ENCODE measurements at regions of chr1 and their contacts with region 1.

Region 1: DNA sequence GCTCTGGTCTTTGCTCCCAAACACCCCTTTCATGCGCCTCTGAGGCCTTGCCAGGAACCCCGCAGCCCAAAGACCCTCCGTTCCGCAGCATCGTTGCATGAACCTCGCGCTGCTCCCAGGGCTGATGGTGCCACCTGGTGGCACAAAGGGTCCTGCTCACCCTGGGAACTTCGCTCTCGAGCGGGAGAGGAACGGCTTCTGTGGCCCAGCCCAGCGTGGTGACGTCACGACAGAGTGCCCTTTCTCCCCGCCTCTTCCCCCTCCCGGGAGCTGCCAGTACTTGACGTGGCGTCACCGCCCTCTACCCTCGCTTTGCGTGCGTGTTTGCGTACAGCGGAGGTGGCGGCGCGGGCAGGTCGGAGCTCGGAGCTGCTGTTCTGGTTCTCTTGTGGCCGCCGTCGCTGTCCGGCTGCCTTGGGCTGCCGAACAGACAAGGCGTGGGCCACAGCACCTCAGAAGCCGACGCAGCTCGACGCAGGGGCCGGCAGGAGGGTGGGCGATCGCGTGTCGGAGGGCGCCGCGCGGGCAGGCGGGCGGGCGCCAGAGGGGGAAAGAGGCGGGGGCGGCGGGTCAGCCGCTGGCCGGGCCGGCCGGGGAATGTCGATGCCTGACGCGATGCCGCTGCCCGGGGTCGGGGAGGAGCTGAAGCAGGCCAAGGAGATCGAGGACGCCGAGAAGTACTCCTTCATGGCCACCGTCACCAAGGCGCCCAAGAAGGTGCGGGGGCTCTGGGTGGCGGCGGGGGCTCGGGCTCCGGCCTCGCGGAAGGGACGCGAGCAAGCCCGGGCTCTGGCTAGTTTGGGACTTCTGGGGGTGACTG is at the start of gene AHCYL1:
- DNase-seq: peak; percentile 98 to 99 (median 99)
- ATAC-seq: peak; percentile 99
- H3K4me3 ChIP-seq: peak within 1 kb of the TSS; percentile 75 to 84
- H3K4me3 Mint-ChIP-seq: peak within 1 kb of the TSS; percentile 99
- H3K27ac ChIP-seq: peak within 1 kb of the TSS; percentile 72 to 84
- H3K27ac Mint-ChIP-seq: peak within 1 kb of the TSS; percentile 97
- H3K4me1 ChIP-seq: peaks cover 20% of the 10 kb centered on the region
- H3K4me1 Mint-ChIP-seq: peaks cover 45% of the 10 kb centered on the region
- H3K27me3 ChIP-seq: no peaks in the 10 kb centered on the region
- H3K27me3 Mint-ChIP-seq: no peaks in the 10 kb centered on the region
- CTCF ChIP-seq: peak; percentile 86
- total RNA-seq, gene AHCYL1: 5.3 to 5.5 TPM

Region 2: GRCh38 chr1:109483672-109484518 is 500.8 kb before region 1 on chr1 and contains the start of gene ATXN7L2:
- CTCF ChIA-PET with region 1: no interaction called
- POLR2A ChIA-PET with region 1: no interaction called
- intact Hi-C with region 1: loop called (anchors 1 kb)
- DNase-seq: peak; percentile 87 to 97 (median 92)
- ATAC-seq: peak; percentile 81
- H3K4me3 ChIP-seq: peak within 1 kb of the TSS; percentile 78 to 90
- H3K4me3 Mint-ChIP-seq: peak within 1 kb of the TSS; percentile 94
- H3K27ac ChIP-seq: peak within 1 kb of the TSS; percentile 78 to 93
- H3K27ac Mint-ChIP-seq: peak within 1 kb of the TSS; percentile 91
- H3K4me1 ChIP-seq: peaks cover 22% of the 10 kb centered on the region
- H3K4me1 Mint-ChIP-seq: peaks cover 35% of the 10 kb centered on the region
- H3K27me3 ChIP-seq: no peaks in the 10 kb centered on the region
- H3K27me3 Mint-ChIP-seq: peaks cover 2% of the 10 kb centered on the region
- CTCF ChIP-seq: no peak
- total RNA-seq, gene ATXN7L2: 16.8 to 19.4 TPM

Region 3: GRCh38 chr1:109636201-109636952 is 348.3 kb before region 1 on chr1:
- CTCF ChIA-PET with region 1: interaction called, 68 read pairs
- POLR2A ChIA-PET with region 1: interaction called, 3 read pairs
- intact Hi-C with region 1: no loop called
- DNase-seq: peak in 1 of 9 experiments; percentile 31
- ATAC-seq: no peak
- H3K4me3 ChIP-seq: no peak overlapping the region
- H3K4me3 Mint-ChIP-seq: no peak overlapping the region
- H3K27ac ChIP-seq: no peak overlapping the region
- H3K27ac Mint-ChIP-seq: no peak overlapping the region
- H3K4me1 ChIP-seq: peaks cover 15% of the 10 kb centered on the region
- H3K4me1 Mint-ChIP-seq: peaks cover 13% of the 10 kb centered on the region
- H3K27me3 ChIP-seq: no peaks in the 10 kb centered on the region
- H3K27me3 Mint-ChIP-seq: peaks cover 2% of the 10 kb centered on the region
- CTCF ChIP-seq: no peak

Region 4: GRCh38 chr1:109773146-109773899 is 211.3 kb before region 1 on chr1:
- CTCF ChIA-PET with region 1: interaction called, 656 read pairs
- POLR2A ChIA-PET with region 1: interaction called, 63 read pairs
- intact Hi-C with region 1: loop called (anchors 1 kb)
- DNase-seq: peak; percentile 29 to 83 (median 67)
- ATAC-seq: peak; percentile 90
- H3K4me3 ChIP-seq: no peak overlapping the region
- H3K4me3 Mint-ChIP-seq: no peak overlapping the region
- H3K27ac ChIP-seq: no peak overlapping the region
- H3K27ac Mint-ChIP-seq: no peak overlapping the region
- H3K4me1 ChIP-seq: peaks cover 3% of the 10 kb centered on the region
- H3K4me1 Mint-ChIP-seq: peaks cover 8% of the 10 kb centered on the region
- H3K27me3 ChIP-seq: peaks cover 0 to 2% of the 10 kb centered on the region in 2 experiments
- H3K27me3 Mint-ChIP-seq: peaks cover 3% of the 10 kb centered on the region
- CTCF ChIP-seq: peak; percentile 65

Region 5: GRCh38 chr1:109807822-109808680 is 176.6 kb before region 1 on chr1:
- CTCF ChIA-PET with region 1: interaction called, 14 read pairs
- POLR2A ChIA-PET with region 1: interaction called, 5 read pairs
- intact Hi-C with region 1: no loop called
- DNase-seq: no peak
- ATAC-seq: no peak
- H3K4me3 ChIP-seq: no peak overlapping the region
- H3K4me3 Mint-ChIP-seq: no peak overlapping the region
- H3K27ac ChIP-seq: no peak overlapping the region
- H3K27ac Mint-ChIP-seq: no peak overlapping the region
- H3K4me1 ChIP-seq: peaks cover 22% of the 10 kb centered on the region
- H3K4me1 Mint-ChIP-seq: peaks cover 26% of the 10 kb centered on the region
- H3K27me3 ChIP-seq: no peaks in the 10 kb centered on the region
- H3K27me3 Mint-ChIP-seq: no peaks in the 10 kb centered on the region
- CTCF ChIP-seq: no peak

Region 6: GRCh38 chr1:110034451-110035235 is 50.0 kb after region 1 on chr1 and contains the start of gene STRIP1:
- CTCF ChIA-PET with region 1: interaction called, 9 read pairs
- POLR2A ChIA-PET with region 1: interaction called, 10 read pairs
- intact Hi-C with region 1: loop called (anchors 1 kb)
- DNase-seq: peak; percentile 83 to 97 (median 90)
- ATAC-seq: peak; percentile 94
- H3K4me3 ChIP-seq: peak within 1 kb of the TSS; percentile 77 to 89
- H3K4me3 Mint-ChIP-seq: peak within 1 kb of the TSS; percentile 98
- H3K27ac ChIP-seq: peak within 1 kb of the TSS; percentile 74 to 84
- H3K27ac Mint-ChIP-seq: peak within 1 kb of the TSS; percentile 96
- H3K4me1 ChIP-seq: peaks cover 36% of the 10 kb centered on the region
- H3K4me1 Mint-ChIP-seq: peaks cover 53% of the 10 kb centered on the region
- H3K27me3 ChIP-seq: no peaks in the 10 kb centered on the region
- H3K27me3 Mint-ChIP-seq: no peaks in the 10 kb centered on the region
- CTCF ChIP-seq: no peak
- total RNA-seq, gene STRIP1: 94.6 to 109 TPM

Measured in CD8-positive, alpha-beta T cell (primary cell).